Left colon (tissue), 2 donors: ENCODE measurements at regions of chr3 and their contacts with region 1.

Region 1: DNA sequence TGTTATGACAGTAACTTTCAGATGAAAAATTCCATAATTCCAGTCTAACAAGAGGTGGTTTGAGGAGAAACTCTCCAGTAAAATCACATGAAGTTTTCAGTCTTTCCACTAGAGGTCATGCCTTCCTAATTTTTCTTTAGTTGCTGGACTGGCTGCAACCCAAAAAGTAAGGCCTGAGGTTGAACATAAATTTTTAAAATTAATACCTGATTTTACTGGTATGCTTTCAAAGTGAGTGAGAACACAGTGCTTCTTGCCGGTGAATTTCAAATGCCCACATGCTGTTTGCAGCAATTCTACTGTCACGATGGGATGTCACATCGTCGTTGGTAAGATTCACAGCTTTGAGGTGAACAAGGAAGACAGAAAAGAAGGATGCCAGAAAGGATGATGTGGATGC is 89.0 kb upstream of the FGF12 start:
- DNase-seq: no peak
- ATAC-seq: peak; percentile 51

Region 2: GRCh38 chr3:192655040-192655439 is 161.3 kb before region 1 on chr3:
- intact Hi-C with region 1: no loop called
- DNase-seq: no peak
- ATAC-seq: no peak

Region 3: GRCh38 chr3:192917404-192918274 is 101.3 kb after region 1 on chr3 and contains the start of gene MB21D2:
- intact Hi-C with region 1: loop called in 1 of 2 experiments (anchors 5 kb)
- DNase-seq: peak; percentile 69 to 74
- ATAC-seq: peak; percentile 86
- total RNA-seq, gene MB21D2: 2.8 to 5.2 TPM

Region 4: GRCh38 chr3:193040836-193041672 is 224.7 kb after region 1 on chr3:
- intact Hi-C with region 1: loop called (anchors 5 kb)
- DNase-seq: peak in 1 of 2 donors; percentile 3
- ATAC-seq: peak; percentile 68

Region 5: GRCh38 chr3:193572426-193572908 is 756.1 kb after region 1 on chr3:
- intact Hi-C with region 1: loop called in 1 of 2 experiments (anchors 5 kb)
- DNase-seq: peak in 1 of 2 donors; percentile 42
- ATAC-seq: peak; percentile 86